ENCODE measurements at regions of chr13 and their contacts with region 1.

Region 1: GRCh38 chr13:20902438-20903163 is at the start of gene XPO4:
- DNase-seq: peak; percentile 75 to 83
- ATAC-seq: peak; percentile 96 to 98 (median 97)
- H3K4me3 ChIP-seq: peak within 1 kb of the TSS; percentile 68 to 100 (median 96)
- H3K27ac ChIP-seq: peak within 1 kb of the TSS; percentile 70 to 97 (median 94)
- H3K4me1 ChIP-seq: peaks cover 0 to 30% (median 23%) of the 10 kb centered on the region in 9 donors
- H3K27me3 ChIP-seq: no peaks in the 10 kb centered on the region
- CTCF ChIP-seq: no peak
- total RNA-seq, gene XPO4: 13.6 to 68.1 (median 38.7) TPM

Region 2: GRCh38 chr13:20851844-20852402 is 50.7 kb before region 1 on chr13:
- intact Hi-C with region 1: loop called in 2 of 10 experiments (anchors 5 kb)
- DNase-seq: no peak
- ATAC-seq: no peak
- H3K4me3 ChIP-seq: no peak overlapping the region
- H3K27ac ChIP-seq: no peak overlapping the region
- H3K4me1 ChIP-seq: peaks cover 0 to 33% (median 15%) of the 10 kb centered on the region in 9 donors
- H3K27me3 ChIP-seq: no peaks in the 10 kb centered on the region
- CTCF ChIP-seq: no peak

Region 3: GRCh38 chr13:20882206-20882605 is 20.4 kb before region 1 on chr13:
- intact Hi-C with region 1: no loop called
- DNase-seq: no peak
- ATAC-seq: peak in 3 of 8 donors; percentile 20 to 55 (median 29)
- H3K4me3 ChIP-seq: no peak overlapping the region
- H3K27ac ChIP-seq: peak overlapping the region in 2 of 10 donors; percentile 13 to 15
- H3K4me1 ChIP-seq: peaks cover 0 to 32% (median 16%) of the 10 kb centered on the region in 9 donors
- H3K27me3 ChIP-seq: no peaks in the 10 kb centered on the region
- CTCF ChIP-seq: no peak

Region 4: DNA sequence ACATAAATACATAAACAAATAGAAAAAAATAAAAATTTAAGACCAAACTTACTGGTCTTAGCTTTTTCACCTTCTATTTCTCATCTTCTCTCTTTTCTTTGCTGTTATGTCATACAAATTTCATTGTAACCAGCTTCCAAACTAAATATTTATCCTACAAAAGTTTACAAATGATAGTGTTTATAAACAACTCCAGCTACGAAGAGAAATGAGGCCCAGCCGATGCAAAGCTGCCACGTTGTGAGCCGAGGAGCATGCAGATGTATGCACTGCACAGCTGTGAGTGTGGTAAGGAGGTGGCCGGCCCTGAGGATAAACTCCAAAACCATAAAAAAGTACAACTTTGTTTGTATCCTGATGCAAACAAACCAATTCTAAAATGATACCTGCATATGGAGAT is 1635.8 kb after region 1 on chr13:
- intact Hi-C with region 1: no loop called
- DNase-seq: no peak
- ATAC-seq: no peak
- H3K4me3 ChIP-seq: no peak overlapping the region
- H3K27ac ChIP-seq: no peak overlapping the region
- H3K4me1 ChIP-seq: no peaks in the 10 kb centered on the region
- H3K27me3 ChIP-seq: no peaks in the 10 kb centered on the region
- CTCF ChIP-seq: no peak